Caco-2 (cell line): ENCODE measurements at regions of chr6 and their contacts with region 1.

Region 1: GRCh38 chr6:122665929-122666328 is 55.7 kb downstream of the PKIB start:
- DNase-seq: no peak
- H3K4me3 ChIP-seq: no peak overlapping the region
- H3K4me3 Mint-ChIP-seq: no peak overlapping the region
- H3K27ac Mint-ChIP-seq: no peak overlapping the region
- H3K4me1 ChIP-seq: no peaks in the 10 kb centered on the region; the same call in 1 of the 2 replicates
- H3K4me1 Mint-ChIP-seq: no peaks in the 10 kb centered on the region
- H3K27me3 ChIP-seq: no peaks in the 10 kb centered on the region
- H3K27me3 Mint-ChIP-seq: no peaks in the 10 kb centered on the region
- CTCF ChIP-seq: no peak

Region 2: DNA sequence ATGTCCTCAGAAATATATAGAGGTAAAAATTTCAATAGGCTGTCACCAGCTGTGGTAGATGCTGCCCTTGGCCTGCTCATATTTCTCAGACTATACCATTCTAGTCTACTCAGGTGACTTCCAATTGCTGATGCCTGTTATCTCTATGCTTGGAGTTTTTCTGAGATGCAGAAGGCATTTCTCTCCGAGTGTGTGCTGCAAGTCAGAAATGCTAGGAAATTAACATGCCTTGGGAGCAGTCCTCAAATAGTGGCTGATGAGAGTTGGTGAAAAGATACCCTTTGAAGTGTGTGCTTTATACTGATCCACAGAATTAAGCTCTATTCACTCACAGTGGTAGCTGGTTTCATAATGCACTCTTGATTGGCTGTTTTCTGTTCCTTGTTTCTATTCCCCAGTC is 98.9 kb before region 1 on chr6:
- CTCF ChIA-PET with region 1: no interaction called
- POLR2A ChIA-PET with region 1: no interaction called
- intact Hi-C with region 1: no loop called
- DNase-seq: no peak
- H3K4me3 ChIP-seq: no peak overlapping the region
- H3K4me3 Mint-ChIP-seq: no peak overlapping the region
- H3K27ac Mint-ChIP-seq: no peak overlapping the region
- H3K4me1 ChIP-seq: no peaks in the 10 kb centered on the region
- H3K4me1 Mint-ChIP-seq: no peaks in the 10 kb centered on the region
- H3K27me3 ChIP-seq: no peaks in the 10 kb centered on the region
- H3K27me3 Mint-ChIP-seq: no peaks in the 10 kb centered on the region
- CTCF ChIP-seq: no peak

Region 3: DNA sequence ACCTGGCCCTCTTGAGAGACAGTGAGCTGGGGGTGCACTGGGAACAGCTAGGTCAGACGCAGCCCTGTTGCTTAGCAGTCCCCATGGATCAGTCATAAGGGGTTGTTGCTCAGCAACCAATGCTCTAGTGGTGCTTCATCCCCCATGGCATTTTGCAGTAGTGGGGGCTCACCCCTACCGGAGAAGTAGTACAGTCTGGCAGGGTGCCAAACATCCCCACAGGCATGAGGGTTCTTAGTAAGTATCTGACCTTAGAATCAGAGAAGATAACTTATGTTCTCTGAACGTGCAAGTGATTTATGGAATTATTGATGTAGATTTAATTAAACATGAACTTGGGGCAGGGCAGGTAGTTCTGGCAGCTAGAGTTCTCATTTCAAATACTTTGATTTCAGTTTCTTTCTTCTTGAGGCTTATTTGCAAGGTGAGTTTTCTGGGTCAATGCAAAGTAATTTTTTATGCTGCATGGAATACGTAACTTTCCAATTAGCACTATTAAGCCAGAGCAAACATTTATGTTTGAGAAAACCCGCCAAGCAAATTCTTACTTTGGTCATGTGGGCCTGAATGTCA is 43.3 kb before region 1 on chr6:
- CTCF ChIA-PET with region 1: no interaction called
- POLR2A ChIA-PET with region 1: no interaction called
- intact Hi-C with region 1: no loop called
- DNase-seq: no peak
- H3K4me3 ChIP-seq: no peak overlapping the region
- H3K4me3 Mint-ChIP-seq: no peak overlapping the region
- H3K27ac Mint-ChIP-seq: no peak overlapping the region
- H3K4me1 ChIP-seq: 0 out of 2 replicates have a peak, but pooled peaks cover 7% of the 10 kb centered on the region
- H3K4me1 Mint-ChIP-seq: no peaks in the 10 kb centered on the region
- H3K27me3 ChIP-seq: no peaks in the 10 kb centered on the region
- H3K27me3 Mint-ChIP-seq: no peaks in the 10 kb centered on the region
- CTCF ChIP-seq: no peak

Region 4: GRCh38 chr6:122653094-122653493 is 12.8 kb before region 1 on chr6:
- CTCF ChIA-PET with region 1: no interaction called
- POLR2A ChIA-PET with region 1: no interaction called
- intact Hi-C with region 1: loop called (anchors 2 kb)
- DNase-seq: no peak
- H3K4me3 ChIP-seq: no peak overlapping the region
- H3K4me3 Mint-ChIP-seq: no peak overlapping the region
- H3K27ac Mint-ChIP-seq: peak overlapping the region; percentile 74
- H3K4me1 ChIP-seq: peaks cover 55% of the 10 kb centered on the region
- H3K4me1 Mint-ChIP-seq: peaks cover 25% of the 10 kb centered on the region
- H3K27me3 ChIP-seq: no peaks in the 10 kb centered on the region
- H3K27me3 Mint-ChIP-seq: no peaks in the 10 kb centered on the region
- CTCF ChIP-seq: no peak